Right ventricle myocardium superior (tissue), 1 donor: ENCODE measurements at regions of chr3 and their contacts with region 1.

Region 1: GRCh38 chr3:153043729-153044328 is 118.2 kb upstream of the RAP2B start:
- DNase-seq: no peak
- ATAC-seq: peak; percentile 45

Region 2: GRCh38 chr3:153161138-153161713 is 117.4 kb after region 1 on chr3:
- intact Hi-C with region 1: loop called (anchors 5 kb)
- DNase-seq: peak; percentile 94
- ATAC-seq: peak; percentile 88

Region 3: GRCh38 chr3:153182501-153183293 is 138.9 kb after region 1 on chr3:
- intact Hi-C with region 1: no loop called
- DNase-seq: no peak
- ATAC-seq: no peak

Region 4: GRCh38 chr3:153284282-153284938 is 240.6 kb after region 1 on chr3:
- intact Hi-C with region 1: loop called (anchors 10 kb)
- DNase-seq: peak; percentile 53
- ATAC-seq: peak; percentile 89

Region 5: DNA sequence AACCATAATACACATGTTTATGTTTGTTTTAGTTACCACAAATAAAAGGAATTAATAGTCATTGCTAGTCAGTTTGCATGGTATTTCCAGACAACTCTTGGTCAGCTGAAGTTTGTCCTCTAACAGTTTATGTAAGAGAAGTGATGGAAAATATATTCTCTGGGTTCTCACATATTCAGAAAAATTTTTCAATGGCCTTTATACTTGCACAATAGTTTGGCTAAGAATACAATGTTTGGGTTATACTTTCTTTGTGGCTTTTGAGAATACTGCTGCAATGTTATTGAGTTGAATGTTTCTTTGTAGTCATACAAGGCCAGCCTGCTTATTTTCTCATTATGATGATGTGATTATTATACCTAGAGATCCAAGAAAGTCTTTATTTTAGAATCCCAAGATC is 252.1 kb after region 1 on chr3:
- intact Hi-C with region 1: no loop called
- DNase-seq: no peak
- ATAC-seq: no peak

Region 6: GRCh38 chr3:153768561-153769469 is 725.0 kb after region 1 on chr3:
- intact Hi-C with region 1: loop called (anchors 5 kb)
- DNase-seq: no peak
- ATAC-seq: peak; percentile 63

Region 7: DNA sequence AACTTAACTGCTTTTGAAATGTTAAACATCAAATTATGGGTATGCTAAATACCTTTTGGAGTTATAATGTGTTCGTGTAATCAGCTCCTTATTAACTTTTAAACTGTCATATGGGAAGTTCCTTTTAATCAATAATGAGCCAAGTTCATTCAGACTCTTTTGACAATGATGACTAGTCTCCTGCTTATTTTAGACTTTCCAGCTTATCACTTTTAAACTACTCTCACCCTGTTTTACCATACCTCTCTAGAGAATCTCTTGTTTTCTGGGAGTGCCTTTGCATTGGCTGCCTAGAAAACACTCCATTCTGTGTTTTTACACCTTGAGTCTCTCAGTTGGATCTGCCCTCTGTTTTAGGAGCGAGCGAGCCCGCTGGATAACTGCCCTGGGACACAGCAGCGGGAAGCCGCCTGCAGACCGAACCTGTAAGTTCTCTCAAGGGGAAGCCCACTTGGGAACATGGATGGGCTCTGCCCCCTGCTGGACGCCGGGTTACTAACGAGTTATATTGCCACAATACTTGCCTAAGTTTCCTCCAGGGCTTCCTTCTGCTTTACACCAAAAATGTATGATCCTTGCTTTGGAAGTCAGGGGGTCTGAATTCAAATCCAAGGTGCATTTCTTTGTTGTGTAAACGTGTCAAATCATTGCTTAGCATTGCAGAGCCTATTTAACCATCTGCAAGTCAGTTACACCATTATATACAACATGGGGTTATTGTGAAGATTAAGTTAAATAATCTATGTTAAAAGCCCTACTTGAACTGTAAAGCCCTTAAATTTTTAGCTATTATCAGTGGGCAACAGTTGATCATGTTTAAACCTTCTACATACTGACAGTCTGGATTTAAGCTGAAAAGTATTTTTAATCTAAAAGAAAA is 1209.2 kb after region 1 on chr3:
- intact Hi-C with region 1: loop called (anchors 10 kb)
- DNase-seq: peak; percentile 93
- ATAC-seq: peak; percentile 95